Ascending aorta (tissue), 2 donors: ENCODE measurements at regions of chr13 and their contacts with region 1.

Region 1: GRCh38 chr13:40069173-40070044 is 413.9 kb downstream of the COG6 start:
- DNase-seq: peak in 1 of 2 donors; percentile 85
- H3K4me3 ChIP-seq: peak overlapping the region; percentile 37 to 41
- H3K27ac ChIP-seq: no peak overlapping the region
- H3K4me1 ChIP-seq: peaks cover under 1 to 3% of the 10 kb centered on the region in 2 donors
- H3K27me3 ChIP-seq: no peaks in the 10 kb centered on the region
- CTCF ChIP-seq: peak; percentile 83 to 93 (median 89)

Region 2: GRCh38 chr13:39913928-39914327 is 155.5 kb before region 1 on chr13:
- intact Hi-C with region 1: no loop called
- DNase-seq: peak in 1 of 2 donors; percentile 64
- H3K4me3 ChIP-seq: no peak overlapping the region
- H3K27ac ChIP-seq: peak overlapping the region; percentile 38 to 52
- H3K4me1 ChIP-seq: peaks cover 0 to 3% of the 10 kb centered on the region in 2 donors
- H3K27me3 ChIP-seq: no peaks in the 10 kb centered on the region
- CTCF ChIP-seq: no peak

Region 3: GRCh38 chr13:40172149-40172591 is 102.8 kb after region 1 on chr13:
- intact Hi-C with region 1: no loop called
- DNase-seq: peak in 1 of 2 donors; percentile 61
- H3K4me3 ChIP-seq: no peak overlapping the region
- H3K27ac ChIP-seq: no peak overlapping the region
- H3K4me1 ChIP-seq: no peaks in the 10 kb centered on the region
- H3K27me3 ChIP-seq: no peaks in the 10 kb centered on the region
- CTCF ChIP-seq: no peak

Region 4: DNA sequence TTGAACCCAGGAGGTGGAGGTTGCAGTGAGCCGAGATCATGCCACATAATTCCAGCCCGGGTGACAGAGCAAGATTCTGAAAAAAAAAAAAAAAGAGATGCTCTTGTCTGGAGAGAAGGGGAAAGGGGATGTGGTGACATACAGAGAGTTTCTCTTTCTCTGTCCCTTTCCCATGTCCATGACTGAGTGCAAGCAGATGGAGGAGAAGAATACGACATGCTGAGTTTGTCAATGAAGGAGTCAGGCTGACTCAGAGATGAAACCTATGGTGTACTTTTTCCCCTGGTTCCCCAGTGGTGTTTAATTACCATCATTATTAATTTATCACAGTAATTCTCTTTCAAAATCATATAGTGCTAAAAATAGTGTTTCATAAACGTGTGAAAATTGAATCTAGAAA is 148.3 kb after region 1 on chr13:
- intact Hi-C with region 1: loop called (anchors 5 kb)
- DNase-seq: no peak
- H3K4me3 ChIP-seq: no peak overlapping the region
- H3K27ac ChIP-seq: no peak overlapping the region
- H3K4me1 ChIP-seq: peaks cover 2 to 11% of the 10 kb centered on the region in 2 donors
- H3K27me3 ChIP-seq: no peaks in the 10 kb centered on the region
- CTCF ChIP-seq: no peak

Region 5: DNA sequence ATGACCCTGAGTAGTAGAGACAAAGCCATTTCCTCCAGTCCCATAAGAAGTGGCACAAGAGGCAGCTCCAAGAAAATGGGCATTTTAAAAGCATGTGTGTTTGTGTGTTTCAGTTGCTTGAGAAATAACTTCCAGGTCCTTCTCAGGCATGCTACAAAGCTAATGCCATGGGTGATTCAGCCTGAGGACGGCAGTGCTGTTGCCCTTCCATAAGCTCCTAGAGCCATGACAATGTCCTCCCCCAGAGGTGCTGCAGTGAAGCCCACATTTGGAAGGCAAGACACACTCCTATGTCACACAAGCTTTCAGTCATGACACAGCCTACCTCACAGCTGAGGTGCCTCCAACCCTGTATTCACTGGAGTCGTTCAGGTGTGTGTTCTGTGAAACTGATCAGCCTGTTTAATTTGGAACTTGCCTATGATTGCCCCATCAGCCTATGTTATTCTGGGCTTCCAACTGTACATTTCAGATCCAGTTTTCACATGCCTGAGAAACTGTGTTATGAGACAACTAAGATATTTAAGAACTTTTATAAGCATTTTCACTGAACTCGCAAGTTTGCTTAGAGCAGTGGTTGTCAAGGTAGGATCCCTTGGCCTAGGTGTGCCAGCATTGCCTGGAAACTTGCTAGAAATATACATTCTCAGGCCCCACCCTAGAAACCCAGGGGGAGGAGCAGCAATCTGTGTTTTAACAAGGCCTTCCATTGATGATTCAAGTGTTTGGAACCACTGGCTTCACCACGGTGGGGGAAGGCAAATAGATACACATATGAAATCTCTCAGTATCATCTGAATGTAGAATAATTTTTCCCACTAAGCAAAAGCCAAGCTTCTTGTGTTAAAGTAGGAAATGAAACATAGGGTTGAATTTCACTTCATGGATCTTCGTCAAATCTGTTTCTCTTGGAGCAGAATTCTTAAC is 383.6 kb after region 1 on chr13:
- intact Hi-C with region 1: loop called (anchors 5 kb)
- DNase-seq: no peak
- H3K4me3 ChIP-seq: no peak overlapping the region
- H3K27ac ChIP-seq: peak overlapping the region; percentile 49 to 74
- H3K4me1 ChIP-seq: peaks cover 0 to 20% of the 10 kb centered on the region in 2 donors
- H3K27me3 ChIP-seq: no peaks in the 10 kb centered on the region
- CTCF ChIP-seq: no peak

Region 6: DNA sequence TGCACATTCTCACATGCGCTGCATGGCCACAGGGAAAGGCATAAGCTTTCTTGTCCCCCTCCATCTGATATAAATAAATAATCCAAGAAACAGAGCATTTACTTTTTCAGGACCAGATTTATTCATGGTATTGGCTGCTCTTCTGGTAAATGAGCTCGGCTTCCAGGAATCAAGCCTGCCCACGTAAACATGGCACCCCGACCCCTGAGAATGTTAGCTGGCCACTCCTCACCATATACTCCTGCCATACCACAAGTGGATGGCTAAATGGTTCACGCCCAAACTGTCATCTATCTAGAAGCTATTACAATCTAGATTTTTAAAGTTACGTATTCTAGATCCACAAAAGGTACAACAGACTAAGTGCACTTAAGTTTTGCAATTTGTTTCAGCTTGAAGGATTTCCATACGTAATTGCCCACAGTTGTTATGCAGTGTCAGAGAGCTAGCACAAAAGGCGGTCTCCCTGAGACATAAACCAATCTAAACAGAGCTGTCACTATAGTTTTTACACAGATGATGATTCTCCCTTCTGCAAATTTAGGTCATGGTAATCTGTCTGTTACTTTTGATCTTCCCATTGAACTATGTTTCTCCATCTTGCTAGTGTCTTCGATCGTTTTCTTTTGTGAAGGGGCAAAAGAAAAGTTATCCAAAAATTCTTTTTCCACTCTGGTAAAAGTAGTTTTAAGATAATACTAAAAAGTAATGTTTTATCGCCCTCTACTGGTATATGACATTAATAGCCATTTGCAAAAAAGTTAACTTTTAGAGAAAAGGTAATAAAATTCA is 613.2 kb after region 1 on chr13:
- intact Hi-C with region 1: loop called (anchors 1 kb)
- DNase-seq: no peak
- H3K4me3 ChIP-seq: no peak overlapping the region
- H3K27ac ChIP-seq: no peak overlapping the region
- H3K4me1 ChIP-seq: peaks cover 0 to 10% of the 10 kb centered on the region in 2 donors
- H3K27me3 ChIP-seq: no peaks in the 10 kb centered on the region
- CTCF ChIP-seq: peak; percentile 55 to 77 (median 61)